Right cardiac atrium (tissue), 5 donors: ENCODE measurements at regions of chr5 and their contacts with region 1.

Region 1: GRCh38 chr5:41869739-41870626 is at the start of gene OXCT1:
- DNase-seq: peak; percentile 85 to 92 (median 91)
- ATAC-seq: peak; percentile 88 to 91
- H3K4me3 ChIP-seq: peak within 1 kb of the TSS; percentile 74
- H3K27ac ChIP-seq: peak within 1 kb of the TSS; percentile 80
- H3K4me1 ChIP-seq: peaks cover 3% of the 10 kb centered on the region
- H3K27me3 ChIP-seq: no peaks in the 10 kb centered on the region
- total RNA-seq, gene OXCT1: 77.9 to 108 (median 84.8) TPM

Region 2: DNA sequence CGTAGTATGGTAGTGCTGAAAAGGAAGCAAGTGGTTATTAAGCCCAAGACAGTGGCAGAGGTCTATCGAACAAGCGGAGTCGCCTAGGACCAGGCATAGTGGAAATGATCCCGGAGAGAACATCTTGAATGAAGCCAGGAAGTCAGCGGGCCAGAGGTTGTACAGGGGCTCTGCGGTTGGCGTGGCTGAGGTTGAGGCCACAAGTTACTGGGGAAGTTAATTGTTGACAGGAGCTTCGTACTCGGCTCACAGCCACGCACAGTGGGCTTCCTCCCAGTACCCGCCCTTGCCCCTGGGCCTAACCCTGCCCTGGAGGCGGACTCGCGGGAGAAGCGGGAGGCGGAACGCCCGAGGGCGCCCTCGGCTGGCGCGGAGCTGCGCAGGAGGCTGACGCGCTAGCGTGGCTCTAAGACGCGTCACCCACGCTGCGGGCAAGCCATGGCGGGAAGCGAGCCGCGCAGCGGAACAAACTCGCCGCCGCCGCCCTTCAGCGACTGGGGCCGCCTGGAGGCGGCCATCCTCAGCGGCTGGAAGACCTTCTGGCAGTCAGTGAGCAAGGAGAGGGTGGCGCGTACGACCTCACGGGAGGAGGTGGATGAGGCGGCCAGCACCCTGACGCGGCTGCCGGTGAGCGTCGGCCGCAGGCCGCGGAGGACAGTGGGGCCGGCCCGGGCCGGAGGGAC is 55.0 kb after region 1 on chr5 and contains the start of gene FBXO4:
- intact Hi-C with region 1: loop called in 1 of 4 experiments (anchors 10 kb)
- DNase-seq: peak; percentile 93 to 96 (median 96)
- ATAC-seq: peak; percentile 99 to 100
- H3K4me3 ChIP-seq: peak within 1 kb of the TSS; percentile 84
- H3K27ac ChIP-seq: peak within 1 kb of the TSS; percentile 97
- H3K4me1 ChIP-seq: no peaks in the 10 kb centered on the region
- H3K27me3 ChIP-seq: no peaks in the 10 kb centered on the region
- total RNA-seq, gene FBXO4: 3.8 to 6.6 (median 4.0) TPM

Region 3: GRCh38 chr5:41962491-41962890 is 92.5 kb after region 1 on chr5:
- intact Hi-C with region 1: no loop called
- DNase-seq: no peak
- ATAC-seq: no peak
- H3K4me3 ChIP-seq: no peak overlapping the region
- H3K27ac ChIP-seq: no peak overlapping the region
- H3K4me1 ChIP-seq: no peaks in the 10 kb centered on the region
- H3K27me3 ChIP-seq: no peaks in the 10 kb centered on the region

Region 4: GRCh38 chr5:42057254-42057690 is 187.3 kb after region 1 on chr5:
- intact Hi-C with region 1: loop called in 1 of 4 experiments (anchors 5 kb)
- DNase-seq: peak; percentile 10 to 53 (median 17)
- ATAC-seq: peak in 1 of 2 donors; percentile 41
- H3K4me3 ChIP-seq: no peak overlapping the region
- H3K27ac ChIP-seq: no peak overlapping the region
- H3K4me1 ChIP-seq: no peaks in the 10 kb centered on the region
- H3K27me3 ChIP-seq: no peaks in the 10 kb centered on the region